ENCODE measurements at regions of chr22 and their contacts with region 1.

Region 1: DNA sequence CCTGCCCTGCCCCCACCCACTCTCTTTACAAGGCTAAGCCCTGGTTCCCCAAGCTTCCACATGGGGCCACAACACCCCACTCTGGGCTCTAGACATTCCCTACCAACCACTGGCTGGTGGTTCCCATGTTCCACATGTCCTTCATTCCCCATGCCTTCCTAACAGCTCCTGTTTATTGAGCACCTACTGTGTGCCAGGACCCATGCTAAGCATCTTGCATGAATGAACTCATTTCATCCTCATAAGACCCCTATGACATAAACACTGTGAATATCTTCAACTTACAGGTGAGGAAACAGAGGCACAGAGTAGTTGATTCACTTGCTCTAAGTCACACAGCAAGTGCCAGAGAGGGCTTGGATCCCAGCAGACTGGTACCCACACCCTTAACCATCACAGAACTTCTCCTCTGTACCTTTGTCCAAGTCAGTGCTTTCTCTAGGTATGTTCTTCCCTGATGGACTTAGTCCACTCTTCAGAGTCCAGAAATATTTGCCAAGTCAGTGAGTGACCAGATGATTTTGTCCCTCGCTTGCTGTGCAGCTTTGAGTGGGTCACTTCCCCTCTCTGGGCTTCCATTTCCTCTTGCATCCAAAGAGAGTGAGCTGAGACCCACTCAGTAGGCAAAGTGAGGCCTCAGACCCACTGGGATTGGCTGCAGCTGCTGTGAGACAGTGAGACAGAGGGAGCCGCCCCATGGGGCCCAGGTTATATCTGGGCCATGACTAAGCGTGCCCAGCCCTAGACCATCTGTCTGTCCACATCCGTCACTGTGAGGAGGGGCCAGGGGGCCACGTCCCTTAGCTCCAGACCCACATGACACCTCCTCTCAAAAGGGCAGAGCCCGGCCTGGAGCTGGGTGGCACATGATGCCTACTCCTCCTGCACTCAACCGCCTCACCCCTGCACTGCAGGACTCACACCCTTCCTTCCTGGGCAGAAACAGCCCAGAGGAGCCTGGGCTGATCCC is 132.4 kb downstream of the MN1 start:
- DNase-seq: peak; percentile 85 to 96 (median 90)
- ATAC-seq: peak; percentile 93 to 96 (median 95)
- H3K4me3 ChIP-seq: no peak overlapping the region
- H3K27ac ChIP-seq: peak overlapping the region; percentile 64 to 93 (median 87)
- H3K4me1 ChIP-seq: peaks cover 12 to 49% (median 35%) of the 10 kb centered on the region in 12 donors
- H3K27me3 ChIP-seq: no peaks in the 10 kb centered on the region
- CTCF ChIP-seq: no peak
- POLR2A ChIP-seq: peak in 1 of 2 donors; percentile 50

Region 2: GRCh38 chr22:27492566-27493201 is 176.4 kb before region 1 on chr22:
- intact Hi-C with region 1: no loop called
- DNase-seq: no peak
- ATAC-seq: no peak
- H3K4me3 ChIP-seq: no peak overlapping the region
- H3K27ac ChIP-seq: no peak overlapping the region
- H3K4me1 ChIP-seq: peaks cover 0 to 7% (median 0%) of the 10 kb centered on the region in 12 donors
- H3K27me3 ChIP-seq: peaks cover 0 to 9% (median 0%) of the 10 kb centered on the region in 9 donors
- CTCF ChIP-seq: no peak
- POLR2A ChIP-seq: no peak

Region 3: GRCh38 chr22:27718186-27719032 is 49.3 kb after region 1 on chr22:
- intact Hi-C with region 1: loop called in 3 of 10 experiments (anchors 2 to 5 kb)
- DNase-seq: peak; percentile 79 to 88 (median 80)
- ATAC-seq: peak; percentile 89 to 96 (median 96)
- H3K4me3 ChIP-seq: peak overlapping the region in 1 of 12 donors; percentile 13
- H3K27ac ChIP-seq: peak overlapping the region in 11 of 12 donors; percentile 42 to 80 (median 59)
- H3K4me1 ChIP-seq: peaks cover 0 to 28% (median 19%) of the 10 kb centered on the region in 12 donors
- H3K27me3 ChIP-seq: no peaks in the 10 kb centered on the region
- CTCF ChIP-seq: no peak
- POLR2A ChIP-seq: peak in 1 of 2 donors; percentile 44

Region 4: DNA sequence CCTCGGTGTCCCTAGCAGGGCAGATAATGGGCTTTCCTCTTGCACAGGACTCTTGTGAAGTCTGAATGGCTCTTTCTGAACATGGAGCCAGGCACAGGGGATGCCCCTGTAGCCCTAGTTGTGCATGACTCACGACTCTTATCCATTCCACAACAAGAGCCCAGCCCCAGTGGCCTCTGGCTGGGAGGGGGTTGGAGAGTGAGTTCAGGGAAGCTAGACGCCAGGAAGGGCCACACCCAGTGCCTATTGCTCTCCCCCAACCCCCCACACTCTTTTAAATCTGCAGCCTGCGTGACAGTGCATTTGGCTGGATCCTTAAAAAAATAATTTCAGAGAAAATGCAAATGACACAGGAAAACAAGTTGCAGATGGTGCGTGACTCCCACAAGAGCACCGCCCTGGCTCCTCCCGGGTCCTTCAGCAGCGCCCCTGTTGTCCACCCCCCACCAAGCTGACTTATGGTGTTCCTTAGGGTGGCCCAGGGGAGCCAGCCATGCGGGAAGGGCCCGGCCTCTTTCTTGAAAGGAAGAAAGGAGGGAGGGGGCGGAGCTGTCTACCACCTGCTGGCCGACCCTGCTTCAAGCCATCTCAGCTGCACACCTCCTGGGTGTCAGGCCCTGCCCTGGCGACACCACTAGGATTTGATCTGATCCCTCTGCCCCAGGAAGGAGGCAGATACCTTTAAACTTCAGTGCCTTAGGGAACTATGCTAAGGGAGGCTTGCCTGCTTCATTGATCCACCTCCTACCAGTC is 57.8 kb after region 1 on chr22:
- intact Hi-C with region 1: loop called in 1 of 10 experiments (anchors 2 kb)
- DNase-seq: peak; percentile 62 to 88 (median 83)
- ATAC-seq: peak; percentile 83 to 96 (median 95)
- H3K4me3 ChIP-seq: peak overlapping the region in 1 of 12 donors; percentile 19
- H3K27ac ChIP-seq: peak overlapping the region; percentile 45 to 96 (median 84)
- H3K4me1 ChIP-seq: peaks cover 0 to 28% (median 14%) of the 10 kb centered on the region in 12 donors
- H3K27me3 ChIP-seq: no peaks in the 10 kb centered on the region
- CTCF ChIP-seq: peak in 2 of 12 donors; percentile 5 to 7
- POLR2A ChIP-seq: no peak

Region 5: GRCh38 chr22:27799334-27800249 is 130.5 kb after region 1 on chr22:
- intact Hi-C with region 1: loop called in 2 of 10 experiments (anchors 2 to 10 kb)
- DNase-seq: peak in 2 of 5 donors; percentile 58 to 66
- ATAC-seq: peak in 3 of 4 donors; percentile 2 to 11 (median 3)
- H3K4me3 ChIP-seq: peak overlapping the region; percentile 59 to 95 (median 80)
- H3K27ac ChIP-seq: peak overlapping the region; percentile 44 to 95 (median 89)
- H3K4me1 ChIP-seq: peaks cover 0 to 68% (median 21%) of the 10 kb centered on the region in 12 donors
- H3K27me3 ChIP-seq: peaks cover 0 to 40% (median 10%) of the 10 kb centered on the region in 9 donors
- CTCF ChIP-seq: no peak
- POLR2A ChIP-seq: no peak

Measured in heart left ventricle (tissue), 16 donors.